Right ventricle myocardium inferior (tissue), 1 donor: ENCODE measurements at regions of chr5 and their contacts with region 1.

Region 1: GRCh38 chr5:120055858-120056257 is 408.2 kb upstream of the PRR16 start:
- DNase-seq: no peak
- ATAC-seq: peak; percentile 58

Region 2: GRCh38 chr5:119897537-119898370 is 158.1 kb before region 1 on chr5:
- intact Hi-C with region 1: no loop called
- DNase-seq: no peak
- ATAC-seq: no peak

Region 3: GRCh38 chr5:120082316-120083071 is 26.6 kb after region 1 on chr5:
- intact Hi-C with region 1: no loop called
- DNase-seq: no peak
- ATAC-seq: no peak

Region 4: GRCh38 chr5:120457839-120458507 is 402.1 kb after region 1 on chr5:
- intact Hi-C with region 1: loop called (anchors 5 kb)
- DNase-seq: peak; percentile 91
- ATAC-seq: peak; percentile 68